Heart right ventricle (tissue), 16 donors: ENCODE measurements at regions of chr1 and their contacts with region 1.

Region 1: GRCh38 chr1:212749821-212750535 is 41.6 kb downstream of the NSL1 start:
- DNase-seq: no peak
- ATAC-seq: peak in 5 of 8 donors; percentile 35 to 60 (median 47)
- H3K4me3 ChIP-seq: no peak overlapping the region
- H3K27ac ChIP-seq: peak overlapping the region in 3 of 10 donors; percentile 7 to 55 (median 41)
- H3K4me1 ChIP-seq: peaks cover 0 to 54% (median 32%) of the 10 kb centered on the region in 9 donors
- H3K27me3 ChIP-seq: no peaks in the 10 kb centered on the region
- CTCF ChIP-seq: peak; percentile 52 to 80 (median 71)

Region 2: GRCh38 chr1:211654838-211655787 is 1094.9 kb before region 1 on chr1:
- intact Hi-C with region 1: no loop called
- DNase-seq: peak; percentile 87
- ATAC-seq: peak; percentile 91 to 97 (median 95)
- H3K4me3 ChIP-seq: peak overlapping the region in 4 of 10 donors; percentile 7 to 48 (median 18)
- H3K27ac ChIP-seq: peak overlapping the region in 1 of 10 donors; percentile 7
- H3K4me1 ChIP-seq: peaks cover 0 to 9% (median 0%) of the 10 kb centered on the region in 9 donors
- H3K27me3 ChIP-seq: no peaks in the 10 kb centered on the region
- CTCF ChIP-seq: peak; percentile 88 to 95 (median 94)

Region 3: DNA sequence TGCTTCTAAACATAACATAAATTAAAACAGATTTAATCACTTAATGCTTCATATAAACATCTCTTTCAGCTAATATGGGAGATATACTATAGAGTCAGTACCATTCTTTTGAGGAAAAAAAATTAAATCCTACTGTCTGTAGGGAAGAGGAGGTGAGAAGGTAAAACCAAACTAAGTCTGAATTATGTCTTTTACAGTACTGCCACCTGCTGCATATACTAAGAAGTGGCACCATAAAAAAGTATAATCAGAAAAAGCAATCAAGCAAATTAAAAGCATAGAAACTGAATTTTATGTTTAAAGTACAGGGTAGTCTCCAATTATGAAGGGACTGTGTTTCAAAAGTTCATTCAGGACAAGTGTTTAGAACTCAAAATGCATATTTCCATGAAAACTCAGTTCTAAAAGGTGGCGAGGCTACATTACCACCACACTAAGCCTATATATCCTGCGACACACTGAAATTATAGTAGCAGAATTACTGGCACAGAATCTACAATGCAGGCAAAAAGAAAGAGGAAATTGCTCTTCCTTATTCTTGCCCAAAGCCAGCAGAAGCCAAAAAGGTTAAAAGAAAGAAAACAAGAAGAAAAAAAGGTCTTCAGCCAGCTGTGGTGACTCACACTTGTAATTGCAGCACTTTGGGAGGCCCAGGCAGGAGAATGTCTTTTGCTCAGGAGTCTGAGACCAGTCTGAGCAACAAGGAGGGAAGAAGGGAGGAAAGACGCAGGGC is 32.6 kb after region 1 on chr1:
- intact Hi-C with region 1: loop called in 1 of 10 experiments (anchors 5 kb)
- DNase-seq: no peak
- ATAC-seq: peak in 3 of 8 donors; percentile 53 to 59 (median 57)
- H3K4me3 ChIP-seq: no peak overlapping the region
- H3K27ac ChIP-seq: peak overlapping the region in 1 of 10 donors; percentile 28
- H3K4me1 ChIP-seq: peaks cover 0 to 17% (median 0%) of the 10 kb centered on the region in 9 donors
- H3K27me3 ChIP-seq: no peaks in the 10 kb centered on the region
- CTCF ChIP-seq: peak; percentile 39 to 69 (median 64)